ENCODE measurements at regions of chr17 and their contacts with region 1.

Region 1: DNA sequence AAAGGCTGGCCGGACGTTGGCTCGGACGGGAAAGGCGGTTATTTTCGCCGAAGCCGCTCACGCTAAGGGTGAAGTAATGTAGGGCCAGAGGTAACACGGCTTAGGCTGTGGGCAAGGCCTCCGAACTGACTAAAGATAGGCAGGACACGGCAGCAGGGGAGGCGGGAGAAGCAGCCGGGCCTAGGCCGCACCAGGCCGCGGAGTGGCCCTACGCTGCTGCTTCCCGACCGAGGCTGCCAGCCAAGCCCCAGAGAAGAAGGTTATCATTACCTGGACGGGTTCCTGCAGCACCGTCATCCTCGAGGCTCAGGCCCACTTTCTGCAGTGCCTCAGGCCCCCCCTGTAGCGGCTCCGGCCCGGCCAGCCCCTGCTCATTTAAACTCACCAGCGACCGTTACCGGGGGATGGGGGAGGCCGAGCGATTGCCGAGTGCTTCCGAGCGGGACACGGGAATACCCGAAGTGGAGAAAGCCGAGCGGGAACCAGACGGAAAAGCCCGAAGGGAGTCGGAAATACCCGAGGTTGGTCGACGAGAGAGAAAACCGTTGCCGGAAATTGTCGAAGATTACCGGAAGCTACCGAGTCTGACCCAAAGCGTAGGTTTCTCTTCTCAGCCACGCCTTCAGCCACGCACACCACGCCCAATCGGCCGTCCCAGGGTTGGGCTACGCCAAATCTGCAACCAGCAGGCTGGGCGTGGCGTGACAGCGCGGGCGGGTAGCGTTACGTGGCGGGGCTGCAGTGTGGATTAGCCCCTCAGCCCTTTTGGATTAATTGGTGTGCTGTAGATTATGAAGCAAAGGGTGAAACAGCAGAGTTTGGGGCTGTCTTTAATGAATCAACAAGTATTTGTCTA is at the start of gene CDC27:
- H3K4me3 Mint-ChIP-seq: peak within 1 kb of the TSS; percentile 90
- H3K27ac Mint-ChIP-seq: peak within 1 kb of the TSS; percentile 95
- H3K4me1 Mint-ChIP-seq: peaks cover 43% of the 10 kb centered on the region
- H3K27me3 Mint-ChIP-seq: no peaks in the 10 kb centered on the region

Region 2: DNA sequence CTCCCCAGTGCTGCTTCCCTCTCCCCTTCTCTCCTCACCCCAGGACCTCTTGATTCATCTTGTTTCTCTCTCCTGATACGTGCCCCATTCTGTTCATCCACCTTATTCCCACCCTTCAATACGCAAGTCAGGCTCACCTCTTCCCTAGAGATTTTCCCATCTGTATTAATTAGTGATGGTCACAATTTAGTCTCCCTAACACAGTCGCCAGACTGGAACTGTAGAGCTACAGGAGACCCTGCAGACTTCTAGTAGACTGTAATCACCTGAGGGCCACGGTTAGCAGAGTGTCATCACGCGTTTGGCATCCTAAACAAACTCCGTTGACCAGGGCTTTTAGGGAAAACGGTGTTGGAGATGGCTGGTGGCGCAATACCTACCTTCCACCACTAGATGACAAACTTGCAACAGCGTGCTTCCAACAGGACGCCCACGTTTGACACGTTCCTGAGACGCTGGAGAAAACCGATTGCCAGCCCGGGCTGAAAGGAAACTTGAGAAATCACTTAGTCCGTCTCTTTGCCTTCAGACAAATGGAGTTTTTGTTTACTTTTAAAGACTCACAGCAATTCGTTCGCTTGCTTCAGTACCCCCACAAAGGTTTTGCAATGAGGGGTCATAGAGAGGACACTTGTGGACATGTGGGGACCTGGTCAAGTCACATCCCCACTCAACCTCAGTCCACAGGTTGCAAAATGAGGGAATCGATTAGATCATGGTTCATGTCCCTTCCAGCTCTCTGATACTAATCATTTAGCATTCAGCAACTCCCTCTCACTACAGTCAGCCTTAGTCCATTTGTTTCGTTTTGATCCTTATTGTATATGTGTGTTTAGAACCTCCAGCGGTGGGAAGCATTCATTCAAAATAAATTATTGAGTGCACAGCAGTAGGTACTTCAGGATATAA is 40.7 kb after region 1 on chr17:
- intact Hi-C with region 1: loop called (anchors 5 kb)
- H3K4me3 Mint-ChIP-seq: peak overlapping the region; percentile 38
- H3K27ac Mint-ChIP-seq: peak overlapping the region; percentile 42
- H3K4me1 Mint-ChIP-seq: peaks cover 56% of the 10 kb centered on the region
- H3K27me3 Mint-ChIP-seq: peaks cover 9% of the 10 kb centered on the region

Region 3: GRCh38 chr17:47323382-47324222 is 134.5 kb after region 1 on chr17 and contains the start of gene EFCAB13:
- intact Hi-C with region 1: loop called (anchors 10 kb)
- H3K4me3 Mint-ChIP-seq: peak within 1 kb of the TSS; percentile 88
- H3K27ac Mint-ChIP-seq: peak within 1 kb of the TSS; percentile 100
- H3K4me1 Mint-ChIP-seq: peaks cover 29% of the 10 kb centered on the region
- H3K27me3 Mint-ChIP-seq: peaks cover 13% of the 10 kb centered on the region